Head of caudate nucleus (tissue), 42 donors: ENCODE measurements at regions of chrX and their contacts with region 1.

Region 1: DNA sequence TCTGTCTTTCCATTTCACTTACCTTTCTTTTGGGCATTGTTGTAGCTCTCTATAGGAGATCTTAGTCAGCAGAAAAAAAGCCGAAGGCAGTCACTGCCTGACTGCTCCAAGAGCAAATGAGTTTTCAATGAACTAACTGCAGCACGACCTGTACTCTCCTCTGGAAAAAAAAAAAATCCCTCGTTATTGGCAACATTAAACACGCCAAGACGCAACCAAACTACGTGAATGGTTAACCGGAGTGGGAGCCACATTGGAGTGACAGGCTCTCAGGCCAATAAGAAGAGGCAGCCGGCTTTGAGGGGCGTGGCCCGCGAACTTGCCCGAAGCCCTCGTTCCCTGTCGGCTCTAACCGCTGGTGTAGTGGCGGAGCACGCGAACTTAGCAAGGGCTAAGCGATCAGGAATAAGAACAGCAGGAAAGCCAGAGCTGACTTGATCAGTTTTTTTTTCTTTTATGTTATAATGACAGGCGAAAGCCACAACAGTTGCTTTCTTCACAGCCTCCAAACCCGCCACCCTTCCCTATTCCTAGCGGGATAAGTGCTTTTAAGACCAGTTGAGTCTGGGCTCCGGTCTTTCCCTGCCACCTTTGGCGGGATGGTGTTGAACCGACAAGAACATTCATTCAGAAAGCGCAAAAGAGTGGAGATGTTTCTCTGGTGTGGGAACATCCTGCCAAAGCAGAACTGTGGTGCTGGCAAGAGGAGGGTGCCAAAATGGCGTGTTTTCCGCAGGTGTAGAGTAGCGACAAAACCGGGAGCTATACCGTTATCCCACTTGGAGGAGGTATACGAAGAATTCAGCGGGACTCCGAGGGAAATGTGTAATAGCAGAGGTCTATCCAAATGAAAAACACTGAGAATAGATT is 80.0 kb downstream of the HMGN5 start:
- DNase-seq: peak; percentile 80 to 96 (median 90)

Region 2: DNA sequence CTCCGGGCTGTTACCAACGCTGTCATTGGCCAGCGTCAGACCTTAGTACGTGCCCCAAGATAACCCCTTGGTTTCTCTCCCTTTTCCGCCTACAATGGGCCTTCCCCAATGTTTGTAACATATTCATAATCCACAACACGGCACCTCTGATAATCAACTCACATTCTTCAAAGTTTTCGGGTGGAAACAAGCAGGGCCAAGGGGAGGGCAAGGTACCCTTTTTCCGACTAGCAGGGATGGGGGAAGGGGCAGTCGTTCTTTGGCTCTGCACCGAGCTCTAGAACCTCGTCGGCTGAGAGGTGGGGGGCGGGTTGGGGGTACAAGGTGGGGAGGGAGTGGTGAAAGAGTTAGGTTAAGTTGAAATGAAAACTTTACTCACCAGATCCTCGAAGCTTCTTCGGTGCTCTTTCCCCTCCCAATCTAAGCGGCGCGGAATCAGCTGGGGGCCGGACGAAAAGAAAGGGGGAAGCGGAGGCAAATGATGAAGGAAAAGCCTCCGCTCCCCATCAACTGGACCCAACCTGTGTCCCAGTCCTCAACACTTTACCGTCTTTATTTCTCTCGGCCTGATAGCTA is 313.5 kb before region 1 on chrX:
- intact Hi-C with region 1: loop called (anchors 5 kb)
- DNase-seq: peak; percentile 54 to 91 (median 83)